ENCODE measurements at regions of chr6 and their contacts with region 1.

Region 1: GRCh38 chr6:113994918-113995342 is 24.0 kb upstream of the HDAC2 start:
- DNase-seq: peak; percentile 90
- ATAC-seq: peak; percentile 82
- H3K4me3 ChIP-seq: no peak overlapping the region
- H3K27ac ChIP-seq: peak overlapping the region; percentile 51
- H3K4me1 ChIP-seq: peaks cover 44% of the 10 kb centered on the region
- H3K27me3 ChIP-seq: no peaks in the 10 kb centered on the region
- CTCF ChIP-seq: peak; percentile 97

Region 2: DNA sequence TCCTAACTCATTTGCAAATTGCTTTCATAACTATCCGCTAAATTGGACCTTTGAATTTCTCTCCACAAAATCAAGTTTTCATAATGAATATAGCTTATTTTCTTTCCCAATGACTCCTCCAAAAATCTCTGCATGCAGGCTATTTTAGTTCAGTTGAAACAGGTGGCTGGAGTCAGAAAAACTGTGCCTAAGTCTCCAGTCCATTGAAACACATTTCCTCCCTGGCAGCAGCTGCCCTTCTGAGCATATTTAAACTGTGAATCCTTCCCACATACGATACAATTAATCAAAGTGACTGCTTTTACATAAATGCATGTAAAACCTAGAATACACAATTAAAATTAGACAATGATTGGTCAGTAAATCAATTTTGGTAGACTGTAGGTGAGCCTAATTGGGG is 482.4 kb before region 1 on chr6:
- CTCF ChIA-PET with region 1: no interaction called
- POLR2A ChIA-PET with region 1: no interaction called
- intact Hi-C with region 1: no loop called
- DNase-seq: no peak
- ATAC-seq: no peak
- H3K4me3 ChIP-seq: no peak overlapping the region
- H3K27ac ChIP-seq: no peak overlapping the region
- H3K4me1 ChIP-seq: no peaks in the 10 kb centered on the region
- H3K27me3 ChIP-seq: no peaks in the 10 kb centered on the region
- CTCF ChIP-seq: no peak

Region 3: GRCh38 chr6:113825781-113826180 is 169.1 kb before region 1 on chr6:
- CTCF ChIA-PET with region 1: no interaction called
- POLR2A ChIA-PET with region 1: no interaction called
- intact Hi-C with region 1: no loop called
- DNase-seq: no peak
- ATAC-seq: no peak
- H3K4me3 ChIP-seq: no peak overlapping the region
- H3K27ac ChIP-seq: no peak overlapping the region
- H3K4me1 ChIP-seq: no peaks in the 10 kb centered on the region
- H3K27me3 ChIP-seq: no peaks in the 10 kb centered on the region
- CTCF ChIP-seq: no peak

Region 4: DNA sequence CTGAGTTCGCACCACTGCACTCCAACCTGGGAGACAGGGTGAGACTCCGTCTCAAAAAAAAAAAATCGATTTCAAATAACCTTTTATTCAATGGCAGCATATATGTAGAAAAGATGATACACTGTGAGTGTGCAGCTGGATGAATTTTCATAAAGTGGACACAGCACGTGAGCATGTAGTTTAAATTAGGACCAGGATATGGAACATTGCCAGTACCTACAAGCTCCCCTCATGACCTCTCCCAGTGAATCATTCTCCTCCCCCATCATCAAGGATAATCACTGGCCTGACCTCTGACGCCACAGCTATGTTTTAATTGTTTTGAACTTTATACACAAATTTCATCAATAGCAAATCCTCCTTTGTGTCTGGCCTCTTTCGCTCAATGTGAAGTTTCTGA is 29.8 kb after region 1 on chr6:
- CTCF ChIA-PET with region 1: no interaction called
- POLR2A ChIA-PET with region 1: no interaction called
- intact Hi-C with region 1: no loop called
- DNase-seq: no peak
- ATAC-seq: no peak
- H3K4me3 ChIP-seq: no peak overlapping the region
- H3K27ac ChIP-seq: no peak overlapping the region
- H3K4me1 ChIP-seq: no peaks in the 10 kb centered on the region
- H3K27me3 ChIP-seq: no peaks in the 10 kb centered on the region
- CTCF ChIP-seq: no peak

Region 5: GRCh38 chr6:114085211-114085610 is 90.3 kb after region 1 on chr6:
- CTCF ChIA-PET with region 1: no interaction called
- POLR2A ChIA-PET with region 1: no interaction called
- intact Hi-C with region 1: loop called (anchors 5 kb)
- DNase-seq: no peak
- ATAC-seq: no peak
- H3K4me3 ChIP-seq: no peak overlapping the region
- H3K27ac ChIP-seq: no peak overlapping the region
- H3K4me1 ChIP-seq: no peaks in the 10 kb centered on the region
- H3K27me3 ChIP-seq: no peaks in the 10 kb centered on the region
- CTCF ChIP-seq: no peak

Region 6: DNA sequence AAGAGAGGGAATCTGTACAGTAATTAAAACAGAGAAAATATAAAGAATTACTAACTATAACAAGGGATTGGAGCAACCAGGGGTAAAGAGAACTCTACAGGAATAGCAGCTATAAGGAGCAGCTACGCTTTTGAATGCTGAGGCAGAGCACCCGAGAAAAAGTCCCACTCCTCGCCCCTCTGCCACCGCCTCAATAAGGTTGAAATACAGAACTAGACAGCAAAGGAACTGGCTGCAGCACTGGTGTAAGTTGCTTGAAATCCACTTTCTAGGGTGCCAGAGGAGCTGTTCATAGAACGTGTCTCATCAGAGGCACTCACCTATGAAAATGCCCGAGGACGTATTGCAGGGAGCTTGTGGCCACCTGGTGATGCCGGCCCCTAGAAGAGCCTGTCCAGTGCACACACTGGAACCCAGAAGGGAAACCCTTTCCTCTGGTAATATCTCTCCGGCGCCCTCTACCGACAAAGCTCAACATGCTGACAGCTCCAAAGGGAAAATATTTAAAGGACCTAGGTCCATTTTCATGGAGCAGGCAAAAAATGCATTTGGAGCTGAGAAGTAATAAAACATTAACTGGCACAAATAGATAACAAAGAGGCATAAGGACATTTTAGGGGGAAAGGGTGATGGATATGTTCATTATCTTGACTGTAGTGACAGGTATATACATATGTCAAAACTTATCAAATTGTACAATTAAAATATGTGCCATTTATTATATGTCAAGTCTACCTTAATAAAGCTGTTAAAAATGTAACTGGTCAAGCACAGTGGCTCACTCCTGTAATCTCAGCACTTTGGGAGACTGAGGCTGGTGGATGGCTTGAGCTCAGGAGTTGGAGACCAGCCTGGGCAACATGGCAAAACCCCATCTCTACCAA is 113.4 kb after region 1 on chr6:
- CTCF ChIA-PET with region 1: interaction called, 22 read pairs
- POLR2A ChIA-PET with region 1: no interaction called
- intact Hi-C with region 1: loop called (anchors 1 kb)
- DNase-seq: peak; percentile 85
- ATAC-seq: peak; percentile 81
- H3K4me3 ChIP-seq: no peak overlapping the region
- H3K27ac ChIP-seq: no peak overlapping the region
- H3K4me1 ChIP-seq: no peaks in the 10 kb centered on the region
- H3K27me3 ChIP-seq: no peaks in the 10 kb centered on the region
- CTCF ChIP-seq: peak; percentile 80

Region 7: GRCh38 chr6:114342826-114343780 is 348.2 kb after region 1 on chr6 and contains the start of gene HS3ST5:
- CTCF ChIA-PET with region 1: interaction called, 7 read pairs
- POLR2A ChIA-PET with region 1: no interaction called
- intact Hi-C with region 1: loop called (anchors 1 kb)
- DNase-seq: peak; percentile 74
- ATAC-seq: peak; percentile 52
- H3K4me3 ChIP-seq: peak within 1 kb of the TSS; percentile 94
- H3K27ac ChIP-seq: peak within 1 kb of the TSS; percentile 41; the same call in 1 of the 2 replicates
- H3K4me1 ChIP-seq: peaks cover 44% of the 10 kb centered on the region
- H3K27me3 ChIP-seq: no peaks in the 10 kb centered on the region
- CTCF ChIP-seq: peak; percentile 55
- total RNA-seq, gene HS3ST5: 0.86 and 1.2 TPM in 2 replicates

Region 8: DNA sequence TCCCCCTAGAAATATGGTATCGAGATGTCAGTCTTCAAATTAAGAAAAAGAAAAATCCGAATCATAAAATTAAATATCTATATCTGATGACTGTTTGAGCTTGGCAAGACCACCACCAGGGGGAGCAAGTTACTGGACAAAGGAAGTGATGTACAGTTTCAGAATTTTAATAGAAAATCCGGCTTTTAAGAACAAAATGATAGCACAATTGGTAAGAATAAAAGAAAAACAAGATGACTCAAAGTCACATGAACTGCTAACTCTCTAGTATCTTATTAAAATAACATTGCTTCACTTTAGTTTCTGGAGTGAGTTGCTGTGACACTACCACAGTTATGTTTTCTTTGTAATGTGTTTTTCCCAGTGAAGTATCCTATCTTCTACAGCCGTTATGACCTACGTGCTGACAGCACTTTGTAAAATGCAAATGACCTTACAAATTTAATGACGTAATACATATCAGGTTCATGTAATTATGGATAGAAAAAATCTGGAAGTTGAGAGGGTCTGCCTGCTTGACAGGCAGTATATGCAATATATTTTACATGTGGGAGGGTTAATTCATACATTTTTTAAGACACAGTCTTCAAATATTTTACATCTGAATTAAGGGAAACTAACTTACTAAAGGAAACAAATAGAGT is 753.2 kb after region 1 on chr6:
- CTCF ChIA-PET with region 1: no interaction called
- POLR2A ChIA-PET with region 1: no interaction called
- intact Hi-C with region 1: loop called (anchors 10 kb)
- DNase-seq: peak; percentile 53
- ATAC-seq: 0 out of 2 replicates have a peak, but pooled peaks have one; percentile 40
- H3K4me3 ChIP-seq: no peak overlapping the region
- H3K27ac ChIP-seq: no peak overlapping the region
- H3K4me1 ChIP-seq: no peaks in the 10 kb centered on the region
- H3K27me3 ChIP-seq: no peaks in the 10 kb centered on the region
- CTCF ChIP-seq: peak; percentile 79